Activated T-helper 1 cell treated with anti-CD3 and anti-CD28 coated beads, Interleukin-12 subunit alpha, Interleukin-12 subunit beta, Interleukin-2, Interleukin-4 antibody, amounts not matched to agents 30 ng/mL and 10 ng/mL and 1 ng/mL, durations not matched to agents 14 hours and 24 hours and 36 hours (primary cell): ENCODE measurements at regions of chr5 and their contacts with region 1.

Region 1: DNA sequence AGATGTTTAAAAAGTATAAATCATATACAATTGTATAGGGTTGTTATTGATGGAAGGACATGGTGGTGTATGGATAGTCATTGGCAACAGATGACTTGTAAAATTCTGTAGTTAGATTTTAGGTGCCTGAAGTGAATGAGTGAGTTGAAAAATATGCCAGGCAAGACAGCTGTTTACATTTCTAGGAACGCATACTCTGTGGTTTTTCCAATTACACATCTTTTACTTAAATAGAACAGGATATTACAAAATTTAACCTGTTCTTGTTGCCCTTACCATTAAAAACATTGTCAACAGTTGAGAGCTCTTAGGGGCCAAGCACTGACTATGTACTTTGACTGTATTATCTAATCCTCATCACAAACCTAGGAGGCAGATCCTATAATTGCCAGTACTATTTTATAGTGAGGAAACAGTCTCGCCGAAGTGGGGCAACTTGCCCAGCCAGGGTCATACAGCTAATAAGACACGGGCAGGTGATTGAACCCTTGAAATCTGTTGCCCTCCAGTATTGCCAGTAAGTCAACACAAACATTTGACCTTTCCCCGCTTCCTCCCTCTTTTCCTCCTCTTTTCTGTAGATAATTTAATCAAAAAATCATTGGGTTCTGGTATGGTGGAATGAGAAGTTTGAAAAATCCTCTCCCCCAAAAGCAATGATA is 88.6 kb downstream of the MACROH2A1 start:
- DNase-seq: no peak
- H3K4me3 Mint-ChIP-seq: peak overlapping the region; percentile 13
- H3K27ac Mint-ChIP-seq: peak overlapping the region; percentile 74
- H3K4me1 Mint-ChIP-seq: peaks cover 69% of the 10 kb centered on the region
- H3K27me3 Mint-ChIP-seq: peaks cover 2% of the 10 kb centered on the region

Region 2: DNA sequence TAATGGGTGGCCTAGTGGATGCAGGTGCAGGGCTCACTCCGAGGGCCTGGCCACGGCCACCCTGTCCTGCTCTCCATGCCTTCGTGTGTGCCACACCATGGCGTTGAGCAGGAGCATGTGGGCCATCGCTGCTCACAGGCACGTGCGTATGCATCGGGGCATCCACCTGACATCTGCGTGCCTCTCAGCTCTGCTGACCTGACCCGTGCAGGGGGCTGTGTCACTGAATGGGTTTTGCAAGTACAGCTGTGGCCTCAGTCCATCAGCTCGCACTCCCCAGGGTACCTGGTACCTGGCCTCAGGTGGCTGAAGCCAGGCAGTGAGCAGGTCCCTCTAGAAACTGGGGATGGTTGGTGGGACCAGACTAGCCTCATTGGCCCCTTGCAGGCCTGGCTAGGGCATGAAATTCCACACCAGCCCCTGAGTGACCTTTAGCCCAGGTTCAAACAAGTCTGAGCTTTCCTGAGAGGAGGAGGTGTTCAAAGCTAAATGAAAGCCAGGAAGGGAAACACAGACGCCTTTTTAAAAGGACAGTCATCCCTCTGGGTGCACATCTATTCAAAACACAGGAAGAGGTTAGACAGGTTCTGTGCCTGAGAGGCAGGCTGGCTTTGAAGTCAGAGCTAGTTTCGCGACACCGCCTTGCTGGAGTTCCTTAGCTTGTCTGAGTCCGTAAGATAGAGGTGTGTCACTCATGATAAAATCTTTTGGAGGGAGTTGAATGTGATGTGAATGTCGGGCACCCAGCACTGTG is 14.6 kb after region 1 on chr5:
- intact Hi-C with region 1: loop called (anchors 1 kb)
- DNase-seq: peak; percentile 49
- H3K4me3 Mint-ChIP-seq: no peak overlapping the region
- H3K27ac Mint-ChIP-seq: peak overlapping the region; percentile 62
- H3K4me1 Mint-ChIP-seq: peaks cover 9% of the 10 kb centered on the region
- H3K27me3 Mint-ChIP-seq: no peaks in the 10 kb centered on the region

Region 3: DNA sequence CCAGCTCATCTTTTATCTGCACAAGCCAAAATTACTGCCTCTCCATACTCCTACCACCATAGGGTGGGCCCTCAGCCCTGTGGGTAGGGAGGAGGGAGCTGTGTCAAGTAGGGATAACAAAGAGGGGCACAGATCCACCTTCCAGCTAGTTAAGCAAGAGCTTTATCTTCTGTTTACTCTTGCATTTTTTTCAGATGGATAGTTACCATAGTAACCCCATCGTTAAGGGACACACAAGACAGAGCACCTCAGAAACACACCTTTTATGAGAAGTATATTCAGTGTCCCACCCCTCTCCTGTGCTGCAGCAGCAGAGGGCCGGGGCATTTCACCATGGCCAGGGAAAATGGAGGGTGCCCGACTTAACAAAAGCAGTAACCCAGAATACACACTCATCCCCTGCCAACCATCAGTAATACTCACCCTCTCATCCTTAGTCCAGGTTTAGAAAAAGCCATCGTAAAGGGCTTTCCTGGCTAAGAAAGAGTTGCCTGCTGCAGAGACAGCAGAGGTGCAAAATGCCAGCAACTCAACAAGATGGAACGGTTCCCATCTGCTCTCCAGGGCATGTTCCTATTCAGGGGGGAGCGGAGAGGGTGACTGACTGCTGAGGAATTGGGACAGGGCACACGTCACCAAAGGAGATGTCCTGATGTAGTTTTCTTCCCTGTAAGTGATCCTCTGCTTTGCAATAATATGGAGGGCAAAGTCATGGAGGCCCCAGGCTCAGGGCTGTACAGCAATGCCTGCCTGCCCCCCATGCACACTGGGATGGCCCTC is 63.5 kb after region 1 on chr5:
- intact Hi-C with region 1: no loop called
- DNase-seq: no peak
- H3K4me3 Mint-ChIP-seq: no peak overlapping the region
- H3K27ac Mint-ChIP-seq: peak overlapping the region; percentile 74
- H3K4me1 Mint-ChIP-seq: peaks cover 81% of the 10 kb centered on the region
- H3K27me3 Mint-ChIP-seq: no peaks in the 10 kb centered on the region

Region 4: DNA sequence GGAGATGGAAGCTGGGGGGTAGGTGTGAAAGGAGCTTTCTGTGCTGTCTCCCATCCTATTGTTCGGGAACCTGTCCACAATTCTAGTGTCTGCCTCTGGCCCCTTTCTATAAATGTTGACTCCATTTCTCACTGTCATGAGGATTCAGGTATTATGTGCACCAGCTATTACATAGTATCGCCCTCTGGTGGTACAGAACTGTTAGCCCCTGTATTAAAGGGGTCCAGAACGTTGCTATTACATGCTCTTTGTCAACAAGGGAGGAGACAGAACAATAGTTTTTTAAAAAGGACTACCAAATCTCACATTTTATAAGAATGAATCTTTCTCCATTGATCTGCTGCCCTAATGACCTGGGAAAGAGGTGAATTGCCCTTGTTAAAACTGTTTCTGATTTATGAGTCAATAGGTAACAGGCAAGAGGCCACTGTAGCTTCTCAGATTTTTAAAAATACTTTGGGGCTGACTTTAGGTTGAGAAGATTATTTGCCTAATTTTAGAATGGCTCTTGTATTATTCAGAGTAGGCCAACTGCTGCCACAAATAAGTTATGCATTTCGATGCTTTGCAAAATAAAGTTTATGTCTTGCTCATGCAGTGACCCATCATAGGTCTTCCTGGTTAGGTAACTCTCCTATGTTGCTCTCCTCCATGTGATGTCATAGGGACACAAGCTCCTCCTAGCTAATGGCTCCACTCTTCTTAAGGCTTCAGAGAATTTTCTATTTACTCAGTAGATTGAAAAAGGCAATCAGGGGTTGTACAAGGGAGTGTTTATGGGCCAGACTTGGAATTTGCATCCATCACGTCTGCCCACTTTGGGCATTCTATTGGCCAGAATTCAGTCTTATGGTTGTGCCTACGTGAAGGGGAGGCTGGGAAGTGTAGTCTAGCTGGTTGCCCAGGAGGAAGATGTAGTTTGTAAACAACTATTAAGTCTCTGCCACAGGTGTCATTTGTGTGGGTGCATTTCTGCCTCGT is 115.9 kb after region 1 on chr5:
- intact Hi-C with region 1: no loop called
- DNase-seq: peak; percentile 14
- H3K4me3 Mint-ChIP-seq: no peak overlapping the region
- H3K27ac Mint-ChIP-seq: peak overlapping the region; percentile 36
- H3K4me1 Mint-ChIP-seq: peaks cover 15% of the 10 kb centered on the region
- H3K27me3 Mint-ChIP-seq: peaks cover 7% of the 10 kb centered on the region